ENCODE measurements at regions of chr15 and their contacts with region 1.

Region 1: GRCh38 chr15:58555162-58556027 is 123.6 kb downstream of the LIPC start:
- DNase-seq: no peak
- H3K4me3 ChIP-seq: no peak overlapping the region
- H3K4me3 Mint-ChIP-seq: no peak overlapping the region
- H3K27ac ChIP-seq: no peak overlapping the region
- H3K27ac Mint-ChIP-seq: no peak overlapping the region
- H3K4me1 ChIP-seq: no peaks in the 10 kb centered on the region
- H3K4me1 Mint-ChIP-seq: peaks cover 9 to 21% (median 15%) of the 10 kb centered on the region in 3 donors
- H3K27me3 ChIP-seq: no peaks in the 10 kb centered on the region
- H3K27me3 Mint-ChIP-seq: peaks cover 10 to 11% of the 10 kb centered on the region in 2 donors

Region 2: GRCh38 chr15:58475573-58476524 is 79.5 kb before region 1 on chr15:
- CTCF ChIA-PET with region 1: no interaction called
- POLR2A ChIA-PET with region 1: no interaction called
- DNase-seq: no peak
- H3K4me3 ChIP-seq: no peak overlapping the region
- H3K4me3 Mint-ChIP-seq: peak overlapping the region in 6 of 7 donors; percentile 17 to 75 (median 42)
- H3K27ac ChIP-seq: no peak overlapping the region
- H3K27ac Mint-ChIP-seq: peak overlapping the region in 7 of 8 donors; percentile 14 to 92 (median 63)
- H3K4me1 ChIP-seq: peaks cover 54% of the 10 kb centered on the region
- H3K4me1 Mint-ChIP-seq: peaks cover 53 to 75% (median 55%) of the 10 kb centered on the region in 3 donors
- H3K27me3 ChIP-seq: no peaks in the 10 kb centered on the region
- H3K27me3 Mint-ChIP-seq: no peaks in the 10 kb centered on the region

Region 3: DNA sequence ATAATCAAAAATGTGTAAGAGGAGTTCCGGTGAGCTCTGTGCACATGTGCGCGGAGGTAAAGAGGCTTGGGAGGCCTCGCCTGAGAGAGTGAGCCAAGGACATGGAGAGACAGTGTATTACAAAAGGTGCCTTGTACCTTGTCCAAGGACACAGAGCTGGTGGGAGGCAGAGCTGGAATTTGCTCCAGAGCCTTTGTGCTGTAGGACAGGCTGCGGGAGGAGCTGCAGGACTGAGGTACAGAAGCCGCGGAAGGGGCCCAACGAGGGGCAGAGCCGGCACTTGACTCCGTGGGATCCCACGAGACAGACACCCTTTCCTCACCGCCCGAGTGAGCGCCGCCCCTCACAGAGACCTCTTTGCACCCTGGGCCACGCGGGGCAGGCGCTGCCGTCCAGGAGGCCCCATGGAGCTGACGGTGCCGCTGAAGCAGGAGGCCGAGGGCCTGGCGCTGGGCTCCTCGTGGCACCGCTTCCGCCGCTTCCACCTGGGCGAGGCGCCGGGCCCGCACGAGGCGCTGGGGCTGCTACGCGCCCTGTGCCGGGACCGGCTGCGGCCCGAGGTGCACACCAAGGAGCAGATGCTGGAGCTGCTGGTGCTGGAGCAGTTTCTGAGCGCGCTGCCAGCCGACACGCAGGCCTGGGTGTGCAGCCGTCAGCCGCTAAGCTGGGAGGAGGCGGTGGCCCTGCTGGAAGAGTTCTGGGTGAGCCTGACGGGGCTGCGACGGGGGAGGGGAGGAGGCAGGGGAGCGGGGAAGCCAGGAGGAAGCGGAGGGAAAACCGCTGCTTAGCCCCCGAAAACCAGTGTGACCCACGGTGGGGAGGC is 309.4 kb after region 1 on chr15:
- CTCF ChIA-PET with region 1: no interaction called
- POLR2A ChIA-PET with region 1: interaction called, 10 read pairs
- DNase-seq: no peak
- H3K4me3 ChIP-seq: no peak overlapping the region
- H3K4me3 Mint-ChIP-seq: peak overlapping the region in 4 of 7 donors; percentile 18 to 41 (median 34)
- H3K27ac ChIP-seq: no peak overlapping the region
- H3K27ac Mint-ChIP-seq: peak overlapping the region in 1 of 8 donors; percentile 91
- H3K4me1 ChIP-seq: no peaks in the 10 kb centered on the region
- H3K4me1 Mint-ChIP-seq: peaks cover 12 to 19% (median 18%) of the 10 kb centered on the region in 3 donors
- H3K27me3 ChIP-seq: no peaks in the 10 kb centered on the region
- H3K27me3 Mint-ChIP-seq: peaks cover 5 to 7% of the 10 kb centered on the region in 2 donors

Measured in CD8-positive, alpha-beta memory T cell (primary cell).